ENCODE measurements at regions of chr18 and their contacts with region 1.

Region 1: GRCh38 chr18:13279181-13280069 is 60.9 kb downstream of the LDLRAD4 start:
- DNase-seq: no peak
- ATAC-seq: no peak
- H3K4me3 ChIP-seq: no peak overlapping the region
- H3K27ac ChIP-seq: peak overlapping the region in 6 of 12 donors; percentile 9 to 57 (median 27)
- H3K4me1 ChIP-seq: peaks cover 0 to 51% (median 30%) of the 10 kb centered on the region in 12 donors
- H3K27me3 ChIP-seq: no peaks in the 10 kb centered on the region
- CTCF ChIP-seq: no peak
- POLR2A ChIP-seq: no peak

Region 2: DNA sequence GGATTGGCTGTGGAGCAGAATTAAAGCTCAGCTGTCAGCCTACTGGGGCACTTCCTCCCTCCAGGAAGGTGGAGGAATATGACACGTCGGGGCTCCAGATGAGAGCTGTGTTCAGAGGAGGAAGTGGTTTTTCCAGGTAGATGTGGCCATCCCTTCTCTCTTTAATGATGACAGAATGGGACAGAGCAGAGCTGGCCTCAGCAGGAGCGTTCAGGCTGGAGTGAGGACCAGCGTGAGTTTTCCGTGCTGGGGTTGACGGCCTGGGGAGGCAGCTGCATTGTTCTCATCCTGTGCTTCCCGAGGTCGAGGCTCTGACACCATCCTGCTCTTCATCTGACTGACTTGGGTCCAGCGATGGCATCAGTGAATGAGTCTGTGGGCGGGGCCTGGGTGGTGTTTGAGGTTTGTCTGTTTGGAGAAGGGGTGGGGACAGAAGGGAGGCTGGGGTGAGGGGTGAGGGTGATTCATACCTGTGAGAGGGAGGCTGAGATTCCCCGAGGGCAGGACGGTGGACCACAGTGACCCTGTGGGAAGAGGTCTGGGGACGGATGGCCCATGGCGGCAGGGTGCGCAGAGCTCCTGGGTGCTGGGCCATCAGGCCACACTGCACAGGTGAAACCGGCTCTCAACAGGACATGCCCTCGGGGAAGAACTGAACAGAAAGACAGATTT is 146.2 kb after region 1 on chr18:
- intact Hi-C with region 1: loop called in 1 of 10 experiments (anchors 10 kb)
- DNase-seq: no peak
- ATAC-seq: no peak
- H3K4me3 ChIP-seq: no peak overlapping the region
- H3K27ac ChIP-seq: peak overlapping the region in 1 of 12 donors; percentile 73
- H3K4me1 ChIP-seq: peaks cover 0 to 56% (median 34%) of the 10 kb centered on the region in 12 donors
- H3K27me3 ChIP-seq: no peaks in the 10 kb centered on the region
- CTCF ChIP-seq: no peak
- POLR2A ChIP-seq: no peak

Region 3: GRCh38 chr18:13500227-13500865 is 220.9 kb after region 1 on chr18:
- intact Hi-C with region 1: loop called in 1 of 10 experiments (anchors 10 kb)
- DNase-seq: peak; percentile 51 to 76 (median 66)
- ATAC-seq: peak; percentile 69 to 84 (median 80)
- H3K4me3 ChIP-seq: peak overlapping the region in 10 of 12 donors; percentile 7 to 47 (median 36)
- H3K27ac ChIP-seq: peak overlapping the region; percentile 35 to 93 (median 83)
- H3K4me1 ChIP-seq: peaks cover 5 to 50% (median 36%) of the 10 kb centered on the region in 12 donors
- H3K27me3 ChIP-seq: no peaks in the 10 kb centered on the region
- CTCF ChIP-seq: peak in 3 of 12 donors; percentile 23 to 29 (median 26)
- POLR2A ChIP-seq: peak in 1 of 2 donors; percentile 22

Measured in heart left ventricle (tissue), 16 donors.